CD8-positive, alpha-beta T cell (primary cell): ENCODE measurements at regions of chr1 and their contacts with region 1.

Region 1: DNA sequence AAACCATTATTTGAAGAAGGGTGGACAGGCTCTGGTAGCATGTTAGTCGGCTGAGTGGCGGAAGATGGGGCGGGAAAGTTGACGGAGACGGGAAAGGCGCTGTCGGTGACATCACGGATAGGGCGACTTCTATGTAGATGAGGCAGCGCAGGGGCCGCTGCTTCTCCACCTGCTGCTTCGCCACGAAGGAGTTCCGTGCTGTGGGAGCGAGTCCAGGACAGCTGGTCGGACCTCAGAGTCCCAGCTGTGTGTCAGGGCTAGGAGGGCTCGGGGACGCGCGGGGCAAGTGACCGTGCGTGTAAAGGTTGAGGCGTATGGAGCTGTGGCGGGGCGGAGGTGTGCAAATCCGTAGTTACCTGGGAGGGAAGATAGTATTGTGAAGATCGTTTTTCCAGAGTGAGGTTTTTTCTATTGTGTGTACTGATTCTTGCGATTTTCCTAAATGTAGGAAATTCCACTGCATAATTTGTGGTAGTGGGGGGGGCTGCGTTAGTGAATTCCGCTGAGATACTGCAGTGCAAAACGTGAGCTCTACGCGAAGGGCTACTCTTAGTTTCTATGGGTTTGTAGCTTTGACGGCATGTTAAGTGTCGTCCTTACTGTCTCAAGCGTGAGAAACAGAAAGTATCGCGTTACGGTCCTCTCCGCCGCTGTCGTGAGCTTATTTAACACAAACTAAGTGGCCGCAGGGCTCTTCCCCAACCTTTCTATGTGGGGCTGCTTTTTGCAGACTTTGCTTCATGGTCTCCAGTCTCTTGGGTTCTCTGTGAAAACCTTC is 111.2 kb upstream of the NBPF11 start:
- DNase-seq: peak; percentile 24 to 86 (median 60)
- ATAC-seq: peak; percentile 84
- H3K4me3 ChIP-seq: peak overlapping the region; percentile 62 to 63
- H3K4me3 Mint-ChIP-seq: peak overlapping the region; percentile 95
- H3K27ac ChIP-seq: peak overlapping the region; percentile 71 to 85
- H3K27ac Mint-ChIP-seq: peak overlapping the region; percentile 99
- H3K4me1 ChIP-seq: no peaks in the 10 kb centered on the region
- H3K4me1 Mint-ChIP-seq: peaks cover 19% of the 10 kb centered on the region
- H3K27me3 ChIP-seq: no peaks in the 10 kb centered on the region
- H3K27me3 Mint-ChIP-seq: no peaks in the 10 kb centered on the region
- CTCF ChIP-seq: no peak

Region 2: DNA sequence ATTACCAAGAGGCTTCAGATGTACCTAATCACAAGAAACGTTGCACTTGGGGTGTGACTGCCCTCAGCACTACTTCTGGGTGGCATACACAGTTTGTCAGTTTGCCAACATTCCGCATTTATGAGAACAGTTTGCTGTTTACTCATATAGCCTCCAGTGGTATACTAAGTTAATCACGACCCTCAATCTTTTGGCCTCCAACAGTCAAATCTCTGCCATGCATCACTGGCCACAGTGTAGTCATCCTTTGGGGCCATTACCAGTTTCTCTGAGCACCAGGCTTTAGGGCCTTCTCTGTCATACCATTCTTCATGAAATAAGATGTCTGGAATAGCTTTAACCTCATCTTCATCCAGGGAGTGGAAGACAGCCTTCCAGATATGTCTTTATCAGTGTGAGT is 784.8 kb before region 1 on chr1:
- CTCF ChIA-PET with region 1: no interaction called
- POLR2A ChIA-PET with region 1: no interaction called
- intact Hi-C with region 1: no loop called
- DNase-seq: no peak
- ATAC-seq: no peak
- H3K4me3 ChIP-seq: no peak overlapping the region
- H3K4me3 Mint-ChIP-seq: no peak overlapping the region
- H3K27ac ChIP-seq: no peak overlapping the region
- H3K27ac Mint-ChIP-seq: no peak overlapping the region
- H3K4me1 ChIP-seq: no peaks in the 10 kb centered on the region
- H3K4me1 Mint-ChIP-seq: no peaks in the 10 kb centered on the region
- H3K27me3 ChIP-seq: no peaks in the 10 kb centered on the region
- H3K27me3 Mint-ChIP-seq: peaks cover 10% of the 10 kb centered on the region
- CTCF ChIP-seq: no peak

Region 3: DNA sequence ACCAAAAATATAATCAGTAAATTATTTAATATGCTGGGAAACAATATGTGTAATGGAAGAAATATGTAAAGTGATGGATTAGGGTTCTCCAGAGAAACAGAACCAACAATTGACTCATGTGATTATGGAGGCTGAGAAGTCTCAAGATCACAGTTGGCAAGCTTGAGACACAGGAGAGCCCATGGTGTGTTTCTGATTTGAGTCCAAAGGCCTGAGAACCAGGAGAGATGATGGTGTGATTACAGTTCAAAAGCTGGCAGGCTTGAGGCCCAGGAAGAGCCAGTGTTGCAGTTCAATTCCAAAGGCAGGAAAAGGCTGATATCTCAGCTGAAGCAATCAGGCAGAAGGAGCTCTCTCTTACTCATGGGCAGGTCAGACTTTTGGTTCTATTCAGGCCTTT is 27.6 kb after region 1 on chr1:
- CTCF ChIA-PET with region 1: no interaction called
- POLR2A ChIA-PET with region 1: no interaction called
- intact Hi-C with region 1: no loop called
- DNase-seq: no peak
- ATAC-seq: no peak
- H3K4me3 ChIP-seq: no peak overlapping the region
- H3K4me3 Mint-ChIP-seq: no peak overlapping the region
- H3K27ac ChIP-seq: no peak overlapping the region
- H3K27ac Mint-ChIP-seq: no peak overlapping the region
- H3K4me1 ChIP-seq: no peaks in the 10 kb centered on the region
- H3K4me1 Mint-ChIP-seq: no peaks in the 10 kb centered on the region
- H3K27me3 ChIP-seq: no peaks in the 10 kb centered on the region
- H3K27me3 Mint-ChIP-seq: peaks cover 13% of the 10 kb centered on the region
- CTCF ChIP-seq: no peak

Region 4: GRCh38 chr1:148318123-148318903 is 55.0 kb after region 1 on chr1:
- CTCF ChIA-PET with region 1: no interaction called
- POLR2A ChIA-PET with region 1: no interaction called
- intact Hi-C with region 1: loop called in 1 of 2 experiments (anchors 5 kb)
- DNase-seq: peak in 8 of 9 experiments; percentile 49 to 81 (median 64)
- ATAC-seq: peak; percentile 80
- H3K4me3 ChIP-seq: peak overlapping the region; percentile 40 to 72
- H3K4me3 Mint-ChIP-seq: peak overlapping the region; percentile 86
- H3K27ac ChIP-seq: peak overlapping the region in 1 of 2 experiments; percentile 9
- H3K27ac Mint-ChIP-seq: peak overlapping the region; percentile 42
- H3K4me1 ChIP-seq: peaks cover 13% of the 10 kb centered on the region
- H3K4me1 Mint-ChIP-seq: peaks cover 24% of the 10 kb centered on the region
- H3K27me3 ChIP-seq: no peaks in the 10 kb centered on the region
- H3K27me3 Mint-ChIP-seq: peaks cover 6% of the 10 kb centered on the region
- CTCF ChIP-seq: no peak